ENCODE measurements at regions of chr6 and their contacts with region 1.

Region 1: GRCh38 chr6:156791320-156791850 is 14.2 kb downstream of the ARID1B start:
- DNase-seq: no peak
- ATAC-seq: peak; percentile 60

Region 2: GRCh38 chr6:156645097-156645496 is 146.3 kb before region 1 on chr6:
- intact Hi-C with region 1: no loop called
- DNase-seq: no peak
- ATAC-seq: no peak

Region 3: GRCh38 chr6:156752666-156753301 is 38.6 kb before region 1 on chr6:
- intact Hi-C with region 1: no loop called
- DNase-seq: no peak
- ATAC-seq: peak; percentile 59

Region 4: GRCh38 chr6:156809446-156810178 is 18.2 kb after region 1 on chr6:
- intact Hi-C with region 1: loop called (anchors 2 kb)
- DNase-seq: no peak
- ATAC-seq: no peak

Region 5: DNA sequence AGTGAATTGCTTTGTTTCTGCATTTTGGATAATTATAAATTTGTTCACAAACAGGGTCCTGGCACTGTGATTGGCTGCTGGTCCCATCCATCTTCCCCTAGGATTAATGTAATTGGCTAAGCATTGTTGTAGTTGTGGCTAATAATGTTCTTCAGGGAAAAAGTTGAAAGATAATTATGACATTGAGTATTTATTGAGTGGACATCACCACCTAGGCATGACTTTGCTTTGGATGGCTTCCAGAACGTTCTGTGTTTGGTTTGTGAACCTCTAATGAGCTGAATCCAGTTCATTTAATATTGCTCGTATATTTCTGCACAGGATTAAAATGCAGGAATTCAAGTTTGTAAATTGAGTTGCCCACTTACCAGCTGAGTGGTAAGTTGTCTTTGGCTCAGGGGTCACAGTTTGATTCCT is 40.9 kb after region 1 on chr6:
- intact Hi-C with region 1: loop called (anchors 5 kb)
- DNase-seq: no peak
- ATAC-seq: no peak

Region 6: DNA sequence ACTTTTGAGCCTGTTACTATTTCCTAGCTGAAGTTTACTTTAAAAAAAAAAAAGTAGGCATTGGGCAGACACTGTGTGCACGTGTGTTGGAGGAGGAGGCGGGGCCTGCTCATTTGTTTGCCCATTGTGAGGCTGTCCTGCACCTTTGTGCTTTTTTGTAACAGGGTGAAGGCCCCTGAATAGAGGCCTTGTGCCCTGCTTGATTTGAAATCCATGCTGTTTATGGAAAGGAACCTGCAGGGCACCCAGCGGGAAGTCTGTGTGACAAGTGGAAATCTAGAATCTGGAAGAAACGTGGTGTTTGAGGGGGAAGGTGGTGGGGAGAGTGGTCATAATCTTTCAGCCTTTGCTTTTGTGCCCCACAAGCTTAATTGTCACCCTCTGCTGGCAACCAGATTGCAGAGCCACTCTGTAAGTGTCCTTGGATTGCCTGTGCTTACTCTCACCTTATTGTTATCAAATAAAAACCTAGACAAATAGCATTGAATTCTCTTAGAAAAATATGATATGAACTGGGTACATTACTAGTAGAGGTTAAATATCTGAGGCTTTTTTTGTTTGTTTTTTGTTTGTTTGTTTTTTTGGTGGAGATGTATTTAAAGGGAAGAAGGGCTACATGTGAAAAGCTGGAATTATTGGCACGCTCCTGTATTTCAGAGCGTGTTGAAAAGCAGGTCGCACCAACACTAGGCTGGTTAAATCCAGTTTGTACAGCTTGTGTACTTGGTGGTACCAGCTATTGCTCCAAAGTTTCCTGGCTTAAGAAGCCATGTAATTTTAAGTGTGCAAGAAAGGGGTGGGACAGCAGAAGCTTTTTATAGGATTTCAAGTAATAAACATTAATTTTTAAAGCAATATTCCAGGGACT is 142.1 kb after region 1 on chr6:
- intact Hi-C with region 1: loop called (anchors 5 kb)
- DNase-seq: no peak
- ATAC-seq: peak; percentile 78

Region 7: DNA sequence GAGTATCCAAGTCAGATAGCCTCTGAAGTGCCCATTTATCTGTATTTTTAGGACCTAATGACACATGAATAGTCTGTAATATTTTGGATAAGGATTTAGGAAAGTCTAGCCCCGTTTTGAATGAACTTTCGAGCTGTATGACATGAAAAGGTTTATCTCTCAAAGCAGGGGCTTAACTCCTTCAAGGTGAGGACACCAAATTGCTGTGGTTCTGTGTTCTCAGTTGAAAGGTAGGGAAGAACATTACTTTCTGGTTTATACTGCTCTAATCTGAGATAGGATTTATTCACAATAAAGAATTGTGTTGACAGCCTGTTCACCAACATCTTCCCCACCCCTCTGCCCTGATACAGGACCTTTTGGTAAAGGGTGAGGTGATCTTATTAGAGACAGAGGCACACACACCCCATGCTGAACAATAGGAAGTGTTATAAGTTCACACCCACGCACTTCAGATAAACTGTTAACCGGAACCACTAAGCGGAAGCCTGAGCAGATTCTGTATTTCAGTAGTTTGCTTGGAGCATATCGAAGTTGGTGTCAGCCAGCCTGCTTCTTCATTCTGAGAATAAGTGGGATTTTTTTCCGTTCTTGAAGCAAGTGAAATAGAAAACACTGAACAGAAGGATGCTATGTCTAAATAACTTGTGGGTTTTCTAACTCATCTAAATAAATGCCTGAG is 308.7 kb after region 1 on chr6:
- intact Hi-C with region 1: no loop called
- DNase-seq: no peak
- ATAC-seq: peak; percentile 48

Measured in Right ventricle myocardium inferior (tissue), 1 donor.